ENCODE measurements at regions of chr12 and their contacts with region 1.

Region 1: GRCh38 chr12:65306366-65307168 is 28.1 kb downstream of the MSRB3 start:
- DNase-seq: peak; percentile 75
- ATAC-seq: peak; percentile 62
- H3K4me3 ChIP-seq: no peak overlapping the region
- H3K27ac ChIP-seq: peak overlapping the region; percentile 83
- H3K4me1 ChIP-seq: peaks cover 17% of the 10 kb centered on the region
- H3K27me3 ChIP-seq: no peaks in the 10 kb centered on the region
- CTCF ChIP-seq: peak; percentile 72
- POLR2A ChIP-seq: no peak
- RAD21 ChIP-seq: peak; percentile 78

Region 2: GRCh38 chr12:65409726-65410125 is 103.2 kb after region 1 on chr12:
- CTCF ChIA-PET with region 1: no interaction called
- POLR2A ChIA-PET with region 1: no interaction called
- dilution Hi-C with region 1: no loop called
- in situ Hi-C with region 1: no loop called
- intact Hi-C with region 1: no loop called
- DNase-seq: no peak
- ATAC-seq: no peak
- H3K4me3 ChIP-seq: no peak overlapping the region
- H3K27ac ChIP-seq: no peak overlapping the region
- H3K4me1 ChIP-seq: peaks cover 2% of the 10 kb centered on the region; the same call in 1 of the 2 replicates
- H3K27me3 ChIP-seq: no peaks in the 10 kb centered on the region
- CTCF ChIP-seq: no peak
- POLR2A ChIP-seq: no peak
- RAD21 ChIP-seq: no peak

Region 3: GRCh38 chr12:65685514-65685913 is 378.9 kb after region 1 on chr12:
- CTCF ChIA-PET with region 1: no interaction called
- POLR2A ChIA-PET with region 1: no interaction called
- dilution Hi-C with region 1: no loop called
- in situ Hi-C with region 1: loop called (anchors 25 kb)
- intact Hi-C with region 1: no loop called
- DNase-seq: peak; percentile 43
- ATAC-seq: peak; percentile 59; the same call in 1 of the 2 replicates
- H3K4me3 ChIP-seq: no peak overlapping the region
- H3K27ac ChIP-seq: no peak overlapping the region
- H3K4me1 ChIP-seq: no peaks in the 10 kb centered on the region; the same call in 1 of the 2 replicates
- H3K27me3 ChIP-seq: no peaks in the 10 kb centered on the region
- CTCF ChIP-seq: peak; percentile 58
- POLR2A ChIP-seq: no peak
- RAD21 ChIP-seq: peak; percentile 64

Region 4: DNA sequence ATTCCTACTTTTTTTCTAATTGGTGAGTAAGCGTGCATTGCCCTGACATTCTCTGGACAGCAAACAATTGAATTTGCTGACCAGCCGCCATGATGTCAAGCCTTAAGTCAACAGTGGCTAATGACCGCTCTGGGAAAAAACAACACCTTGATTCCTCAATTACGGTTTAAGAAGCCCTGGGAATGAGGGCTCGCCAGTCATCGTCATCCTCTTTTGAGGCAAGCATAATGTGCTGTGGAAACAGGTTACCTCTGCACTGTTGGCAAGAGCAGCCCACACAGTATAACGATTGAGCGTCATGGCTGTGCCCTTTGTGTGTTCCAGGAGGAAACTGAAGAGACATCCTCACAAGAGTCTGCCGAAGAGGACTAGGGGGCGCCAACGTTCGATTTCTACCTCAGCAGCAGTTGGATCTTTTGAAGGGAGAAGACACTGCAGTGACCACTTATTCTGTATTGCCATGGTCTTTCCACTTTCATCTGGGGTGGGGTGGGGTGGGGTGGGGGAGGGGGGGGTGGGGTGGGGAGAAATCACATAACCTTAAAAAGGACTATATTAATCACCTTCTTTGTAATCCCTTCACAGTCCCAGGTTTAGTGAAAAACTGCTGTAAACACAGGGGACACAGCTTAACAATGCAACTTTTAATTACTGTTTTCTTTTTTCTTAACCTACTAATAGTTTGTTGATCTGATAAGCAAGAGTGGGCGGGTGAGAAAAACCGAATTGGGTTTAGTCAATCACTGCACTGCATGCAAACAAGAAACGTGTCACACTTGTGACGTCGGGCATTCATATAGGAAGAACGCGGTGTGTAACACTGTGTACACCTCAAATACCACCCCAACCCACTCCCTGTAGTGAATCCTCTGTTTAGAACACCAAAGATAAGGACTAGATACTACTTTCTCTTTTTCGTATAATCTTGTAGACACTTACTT is 656.6 kb after region 1 on chr12:
- CTCF ChIA-PET with region 1: no interaction called
- POLR2A ChIA-PET with region 1: no interaction called
- dilution Hi-C with region 1: no loop called
- in situ Hi-C with region 1: no loop called
- intact Hi-C with region 1: loop called (anchors 10 kb)
- DNase-seq: no peak
- ATAC-seq: no peak
- H3K4me3 ChIP-seq: no peak overlapping the region
- H3K27ac ChIP-seq: no peak overlapping the region
- H3K4me1 ChIP-seq: peaks cover 12% of the 10 kb centered on the region
- H3K27me3 ChIP-seq: no peaks in the 10 kb centered on the region
- CTCF ChIP-seq: peak; percentile 19; the same call in 1 of the 2 replicates
- POLR2A ChIP-seq: no peak
- RAD21 ChIP-seq: no peak

Region 5: DNA sequence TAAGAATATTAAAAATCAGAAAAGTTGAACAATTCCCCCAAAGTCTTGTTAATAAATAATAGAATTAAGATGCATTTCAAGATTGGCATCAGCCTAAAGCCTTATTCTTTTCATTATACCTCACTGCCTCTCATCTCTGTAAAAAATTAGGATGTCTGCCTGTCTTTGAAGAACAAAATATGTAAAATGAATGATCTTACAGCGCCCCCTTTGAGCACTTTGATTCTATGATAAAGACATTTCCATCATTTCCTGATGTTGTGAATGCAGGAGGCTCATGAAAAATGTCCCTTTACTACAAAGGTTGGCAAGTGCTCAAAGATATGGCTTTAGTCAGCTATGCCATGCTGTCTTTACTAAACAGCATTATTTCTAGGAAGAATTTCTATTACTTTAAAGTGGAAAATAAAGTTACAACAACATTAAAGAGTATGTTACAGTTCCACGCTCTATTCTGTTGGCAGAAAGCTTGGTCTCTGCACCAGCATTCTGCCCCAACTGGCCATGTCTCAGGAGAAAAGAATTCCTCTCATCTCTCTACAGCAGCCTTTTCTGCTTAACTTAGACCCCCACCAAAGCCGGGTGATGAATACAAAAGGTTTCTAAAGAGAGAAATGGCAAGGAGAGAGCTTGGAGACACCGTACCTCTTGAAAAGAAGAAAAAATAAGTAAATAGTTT is 728.9 kb after region 1 on chr12:
- CTCF ChIA-PET with region 1: no interaction called
- POLR2A ChIA-PET with region 1: no interaction called
- dilution Hi-C with region 1: no loop called
- in situ Hi-C with region 1: no loop called
- intact Hi-C with region 1: loop called (anchors 5 kb)
- DNase-seq: peak; percentile 61
- ATAC-seq: 0 out of 2 replicates have a peak, but pooled peaks have one; percentile 24
- H3K4me3 ChIP-seq: no peak overlapping the region
- H3K27ac ChIP-seq: no peak overlapping the region
- H3K4me1 ChIP-seq: peaks cover 6% of the 10 kb centered on the region
- H3K27me3 ChIP-seq: no peaks in the 10 kb centered on the region
- CTCF ChIP-seq: peak; percentile 56
- POLR2A ChIP-seq: no peak
- RAD21 ChIP-seq: peak; percentile 53

Region 6: DNA sequence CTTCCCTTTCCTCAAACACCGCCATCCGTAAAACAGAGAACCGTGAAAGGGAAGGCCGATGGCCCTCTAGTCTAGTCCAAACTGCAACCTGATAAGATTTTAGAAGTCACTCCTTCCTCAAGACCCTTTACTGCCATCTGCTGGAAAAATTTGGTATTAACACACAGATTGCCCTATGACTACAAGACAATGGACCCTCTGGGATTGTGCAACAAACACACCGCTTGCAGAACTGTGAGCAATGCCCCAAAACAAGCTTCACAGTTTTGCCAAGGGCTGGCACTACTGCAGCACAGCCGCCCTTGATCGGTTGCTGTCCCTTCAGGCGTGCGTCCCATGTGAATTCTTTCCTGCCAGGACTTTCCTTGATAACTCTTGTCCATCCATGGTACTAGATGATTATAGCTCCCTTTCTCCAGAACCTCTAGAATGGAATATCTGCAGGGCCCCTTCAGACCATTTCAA is 800.9 kb after region 1 on chr12:
- CTCF ChIA-PET with region 1: no interaction called
- POLR2A ChIA-PET with region 1: no interaction called
- dilution Hi-C with region 1: no loop called
- in situ Hi-C with region 1: no loop called
- intact Hi-C with region 1: loop called (anchors 5 kb)
- DNase-seq: peak; percentile 94
- ATAC-seq: peak; percentile 99
- H3K4me3 ChIP-seq: no peak overlapping the region
- H3K27ac ChIP-seq: no peak overlapping the region
- H3K4me1 ChIP-seq: peaks cover 4% of the 10 kb centered on the region
- H3K27me3 ChIP-seq: no peaks in the 10 kb centered on the region
- CTCF ChIP-seq: peak; percentile 77
- POLR2A ChIP-seq: no peak
- RAD21 ChIP-seq: peak; percentile 79

Region 7: GRCh38 chr12:67263471-67263870 is 1956.9 kb after region 1 on chr12:
- CTCF ChIA-PET with region 1: no interaction called
- POLR2A ChIA-PET with region 1: no interaction called
- dilution Hi-C with region 1: no loop called
- in situ Hi-C with region 1: no loop called
- intact Hi-C with region 1: no loop called
- DNase-seq: no peak
- ATAC-seq: no peak
- H3K4me3 ChIP-seq: no peak overlapping the region
- H3K27ac ChIP-seq: no peak overlapping the region
- H3K4me1 ChIP-seq: no peaks in the 10 kb centered on the region
- H3K27me3 ChIP-seq: no peaks in the 10 kb centered on the region
- CTCF ChIP-seq: no peak
- POLR2A ChIP-seq: no peak
- RAD21 ChIP-seq: no peak